Left ventricle myocardium inferior (tissue), 1 donor: ENCODE measurements at regions of chr6 and their contacts with region 1.

Region 1: GRCh38 chr6:38871741-38872568 is 156.8 kb downstream of the DNAH8 start:
- DNase-seq: no peak
- H3K4me3 ChIP-seq: no peak overlapping the region
- H3K27ac ChIP-seq: no peak overlapping the region
- H3K4me1 ChIP-seq: no peaks in the 10 kb centered on the region
- H3K27me3 ChIP-seq: peaks cover 38% of the 10 kb centered on the region
- CTCF ChIP-seq: peak; percentile 89

Region 2: DNA sequence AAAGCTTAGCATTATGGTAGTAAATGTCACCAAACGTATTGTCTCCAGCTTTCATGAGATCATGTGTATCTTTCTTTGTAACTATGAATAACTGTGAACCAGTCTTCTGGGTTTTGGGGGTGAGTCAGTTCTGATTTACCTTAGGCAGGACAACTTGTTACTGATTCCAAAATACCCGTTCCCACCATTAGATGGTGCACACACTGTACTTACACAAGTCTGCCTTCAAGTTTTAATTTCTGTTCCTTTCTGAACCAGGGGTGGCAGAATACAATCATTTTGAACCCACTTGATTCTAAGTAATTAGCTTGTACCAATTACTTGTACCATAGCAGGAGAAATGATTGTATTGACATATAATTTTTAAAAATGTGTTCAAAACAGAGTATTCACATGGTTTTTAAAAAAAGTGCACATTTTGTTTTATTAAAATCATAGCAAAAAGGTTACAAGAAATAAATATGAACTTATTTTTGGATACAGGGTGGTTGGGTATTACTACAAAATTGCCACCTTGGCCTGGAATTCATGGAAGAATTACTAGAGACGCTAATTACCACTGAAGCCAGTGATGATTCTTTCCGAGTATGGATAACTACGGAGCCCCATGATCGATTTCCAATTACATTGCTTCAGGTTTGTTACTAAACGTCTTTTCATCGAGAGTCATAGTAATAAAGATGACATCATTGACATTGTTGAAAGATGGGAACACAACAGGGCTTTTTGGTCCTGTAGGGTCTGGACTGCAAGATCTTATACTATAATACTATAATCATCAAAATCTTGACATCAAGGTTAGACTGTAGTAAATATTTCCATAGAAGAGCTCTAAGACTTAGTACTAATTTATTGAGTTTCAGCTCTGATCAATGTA is 101.5 kb after region 1 on chr6:
- intact Hi-C with region 1: loop called (anchors 10 kb)
- DNase-seq: no peak
- H3K4me3 ChIP-seq: no peak overlapping the region
- H3K27ac ChIP-seq: peak overlapping the region; percentile 67
- H3K4me1 ChIP-seq: peaks cover 21% of the 10 kb centered on the region
- H3K27me3 ChIP-seq: peaks cover 17% of the 10 kb centered on the region
- CTCF ChIP-seq: peak; percentile 72

Region 3: GRCh38 chr6:39166189-39166911 is 294.4 kb after region 1 on chr6:
- intact Hi-C with region 1: loop called (anchors 10 kb)
- DNase-seq: peak; percentile 59
- H3K4me3 ChIP-seq: no peak overlapping the region
- H3K27ac ChIP-seq: no peak overlapping the region
- H3K4me1 ChIP-seq: peaks cover 3% of the 10 kb centered on the region
- H3K27me3 ChIP-seq: peaks cover 42% of the 10 kb centered on the region
- CTCF ChIP-seq: peak; percentile 87

Region 4: DNA sequence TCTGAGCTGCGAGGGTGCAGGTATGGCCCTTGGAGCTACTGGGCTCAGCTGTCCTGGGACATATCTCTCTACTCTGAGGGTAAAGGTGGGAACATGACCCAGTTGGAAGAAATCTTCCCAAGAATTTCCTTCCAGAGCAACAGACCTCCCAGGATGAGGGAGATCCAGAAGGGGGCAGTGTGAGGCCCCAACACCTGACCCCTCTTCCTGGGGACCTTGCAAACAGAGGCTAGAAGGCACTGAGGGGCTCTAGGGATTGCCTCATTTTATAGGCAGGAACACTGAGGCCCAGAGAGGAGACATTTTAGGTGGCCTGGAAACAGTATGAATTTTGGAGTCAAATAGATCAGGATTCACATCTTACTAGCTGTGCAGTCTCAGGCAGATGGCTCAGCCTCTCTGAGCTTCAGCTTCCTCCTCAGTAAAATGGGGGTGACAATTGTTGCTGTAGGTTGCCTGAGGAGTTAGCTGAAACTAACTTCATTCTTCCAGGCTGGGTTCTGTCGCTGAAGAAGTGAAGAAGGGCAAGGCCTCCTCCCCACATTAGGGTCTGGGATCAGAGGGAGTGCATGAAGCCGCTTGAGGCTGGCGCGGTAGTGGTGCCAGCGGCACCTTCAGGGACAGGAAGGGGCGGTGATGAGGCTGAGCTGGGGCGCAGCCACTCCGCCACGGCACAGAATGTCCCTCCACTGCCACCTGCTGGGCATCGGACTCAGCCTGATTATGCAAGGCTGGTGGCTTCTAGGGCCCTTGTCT is 430.9 kb after region 1 on chr6:
- intact Hi-C with region 1: loop called (anchors 10 kb)
- DNase-seq: peak; percentile 79
- H3K4me3 ChIP-seq: peak overlapping the region; percentile 21
- H3K27ac ChIP-seq: no peak overlapping the region
- H3K4me1 ChIP-seq: peaks cover 3% of the 10 kb centered on the region
- H3K27me3 ChIP-seq: peaks cover 46% of the 10 kb centered on the region
- CTCF ChIP-seq: peak; percentile 90